Psoas muscle (tissue), 8 donors: ENCODE measurements at regions of chr19 and their contacts with region 1.

Region 1: GRCh38 chr19:4415352-4415751 is 12.9 kb downstream of the CHAF1A start:
- DNase-seq: no peak
- ATAC-seq: no peak
- H3K4me3 ChIP-seq: no peak overlapping the region
- H3K27ac ChIP-seq: no peak overlapping the region
- H3K4me1 ChIP-seq: peaks cover 10% of the 10 kb centered on the region
- H3K27me3 ChIP-seq: no peaks in the 10 kb centered on the region
- CTCF ChIP-seq: no peak

Region 2: GRCh38 chr19:4149518-4150288 is 265.6 kb before region 1 on chr19:
- intact Hi-C with region 1: no loop called
- DNase-seq: no peak
- ATAC-seq: no peak
- H3K4me3 ChIP-seq: no peak overlapping the region
- H3K27ac ChIP-seq: no peak overlapping the region
- H3K4me1 ChIP-seq: no peaks in the 10 kb centered on the region
- H3K27me3 ChIP-seq: peaks cover 0 to 47% (median 11%) of the 10 kb centered on the region in 3 donors
- CTCF ChIP-seq: no peak

Region 3: DNA sequence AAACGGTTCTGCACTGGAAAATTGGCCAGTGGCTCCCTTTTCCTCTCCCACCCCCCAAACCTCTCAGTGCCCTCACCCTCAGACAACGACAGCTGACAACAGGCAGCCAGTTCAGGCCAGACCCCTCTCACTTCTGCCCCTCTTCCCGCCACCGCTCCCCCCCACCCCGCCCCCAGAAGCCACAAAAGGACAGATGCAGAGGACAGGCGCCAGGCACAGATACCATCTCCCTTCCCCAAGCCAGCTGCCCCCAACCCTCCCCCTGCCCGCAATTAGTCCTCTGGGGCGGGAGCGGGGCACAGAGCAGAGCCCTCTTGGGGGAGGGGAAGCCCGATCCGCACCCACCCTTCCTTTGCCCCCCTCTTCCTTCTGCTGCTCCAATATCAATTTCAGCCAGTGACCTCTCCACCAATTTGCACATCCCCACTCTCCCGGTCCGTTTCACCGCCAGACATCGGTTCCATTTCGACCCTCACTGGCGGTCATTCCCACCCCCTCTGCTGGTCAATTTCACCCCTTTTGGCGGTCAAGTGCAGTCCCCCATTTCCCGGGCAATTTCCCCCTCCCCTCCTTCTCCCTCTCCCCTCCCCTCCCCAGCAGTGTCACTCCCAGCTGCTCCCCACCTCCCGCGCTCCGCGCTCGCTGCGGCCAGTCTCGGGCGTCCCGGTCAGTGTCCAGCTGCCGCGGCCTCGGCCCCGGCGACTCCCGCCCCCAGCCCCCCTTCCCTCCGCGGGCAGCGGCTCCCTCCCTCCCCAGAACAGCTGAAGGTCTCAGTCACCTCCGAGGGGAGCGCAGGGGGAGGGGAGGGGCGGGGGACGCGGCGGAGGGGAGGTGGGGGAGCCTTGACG is 136.7 kb before region 1 on chr19 and contains the start of gene SHD:
- intact Hi-C with region 1: loop called in 1 of 2 experiments (anchors 10 kb)
- DNase-seq: no peak
- ATAC-seq: peak in 1 of 4 donors; percentile 19
- H3K4me3 ChIP-seq: peak within 1 kb of the TSS; percentile 51
- H3K27ac ChIP-seq: no peak within 1 kb of the TSS
- H3K4me1 ChIP-seq: peaks cover 4% of the 10 kb centered on the region
- H3K27me3 ChIP-seq: peaks cover 0 to 51% (median 16%) of the 10 kb centered on the region in 3 donors
- CTCF ChIP-seq: no peak
- total RNA-seq, gene SHD: 0.42 to 1.6 (median 0.61) TPM in 3 of 4 donors, not detected in the other

Region 4: GRCh38 chr19:4313847-4314490 is 101.4 kb before region 1 on chr19:
- intact Hi-C with region 1: no loop called
- DNase-seq: no peak
- ATAC-seq: no peak
- H3K4me3 ChIP-seq: no peak overlapping the region
- H3K27ac ChIP-seq: no peak overlapping the region
- H3K4me1 ChIP-seq: no peaks in the 10 kb centered on the region
- H3K27me3 ChIP-seq: peaks cover 0 to 6% (median 0%) of the 10 kb centered on the region in 3 donors
- CTCF ChIP-seq: no peak

Region 5: DNA sequence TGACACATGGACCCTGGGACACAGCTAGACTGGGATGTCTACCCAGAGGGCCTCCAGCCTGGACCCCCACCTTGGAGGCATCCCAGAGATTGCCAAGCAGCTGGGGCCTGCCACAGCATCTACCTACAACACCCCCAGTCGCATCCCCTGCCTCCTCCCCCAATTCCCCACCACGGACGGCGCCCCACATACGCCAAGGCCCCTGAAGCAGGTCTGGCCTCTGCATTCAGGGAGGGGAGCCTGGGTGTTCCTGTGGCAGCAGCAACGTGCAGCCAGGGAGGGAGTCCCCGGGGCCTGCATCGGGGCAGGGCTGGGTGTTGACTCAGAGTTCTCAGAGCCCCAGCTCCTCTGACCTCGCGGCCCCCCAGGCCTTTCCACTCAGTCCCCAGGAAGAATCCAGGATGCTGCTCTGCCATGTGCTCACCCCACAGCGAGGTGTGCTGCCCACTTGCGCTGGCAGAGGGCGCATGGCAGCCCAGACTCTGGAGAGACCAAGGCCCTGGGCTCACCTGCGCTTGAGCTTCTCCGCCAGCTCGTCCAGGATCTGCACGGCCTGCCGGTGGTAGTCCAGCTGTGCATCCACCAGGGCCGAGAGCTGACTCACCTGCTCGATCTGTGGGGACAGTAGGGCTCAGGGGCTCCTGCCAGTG is 52.4 kb before region 1 on chr19:
- intact Hi-C with region 1: no loop called
- DNase-seq: no peak
- ATAC-seq: no peak
- H3K4me3 ChIP-seq: no peak overlapping the region
- H3K27ac ChIP-seq: no peak overlapping the region
- H3K4me1 ChIP-seq: peaks cover 7% of the 10 kb centered on the region
- H3K27me3 ChIP-seq: no peaks in the 10 kb centered on the region
- CTCF ChIP-seq: no peak